ENCODE measurements at regions of chr1 and their contacts with region 1.

Region 1: DNA sequence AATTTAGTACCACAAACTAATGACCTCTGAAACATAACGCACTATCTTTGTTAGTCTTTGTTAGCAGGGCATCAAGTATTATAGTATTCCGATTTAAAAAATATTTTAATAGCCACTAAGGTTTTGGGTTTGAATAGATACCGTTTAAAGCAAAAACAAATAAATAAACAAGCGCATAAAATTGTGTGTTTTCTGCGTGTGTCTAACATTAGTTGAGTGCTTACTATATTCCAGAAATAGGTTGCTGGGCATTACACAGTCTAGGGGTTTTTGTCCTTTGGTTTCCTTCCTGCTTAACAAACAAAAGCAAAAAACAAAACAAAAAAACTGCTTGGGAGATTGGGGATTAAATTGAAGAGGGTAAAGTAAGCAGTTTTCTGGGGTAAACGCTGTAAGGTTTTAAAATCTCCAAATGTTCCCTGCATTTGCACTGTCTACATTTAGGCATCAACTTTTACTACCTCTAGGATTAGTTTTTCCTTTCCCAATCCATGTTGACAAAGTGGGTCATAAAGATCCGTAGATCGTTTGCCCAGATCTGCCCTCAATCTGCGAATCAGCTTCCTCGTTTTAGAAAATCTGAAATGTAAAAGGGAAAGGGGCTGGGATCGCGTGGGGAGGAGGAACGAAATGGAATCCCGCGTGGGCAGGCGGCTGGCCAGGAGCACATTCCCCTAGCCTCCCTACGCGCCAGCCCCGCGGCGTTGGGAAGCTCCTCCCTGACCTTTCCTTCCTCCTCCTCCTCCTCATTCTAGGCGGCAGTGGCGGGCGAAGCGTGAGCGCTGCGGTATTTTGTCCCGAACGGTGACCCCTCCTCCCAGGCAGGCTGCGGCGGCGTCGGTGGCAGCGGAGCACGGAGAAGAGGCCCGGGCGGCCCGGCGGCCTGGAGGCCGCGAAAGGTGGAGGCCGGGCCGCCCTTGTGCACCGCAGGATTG is at the start of gene KCTD3:
- DNase-seq: peak; percentile 87
- H3K4me3 Mint-ChIP-seq: peak within 1 kb of the TSS; percentile 95
- H3K27ac Mint-ChIP-seq: peak within 1 kb of the TSS; percentile 99
- H3K4me1 Mint-ChIP-seq: peaks cover 32% of the 10 kb centered on the region
- H3K27me3 Mint-ChIP-seq: no peaks in the 10 kb centered on the region
- CTCF ChIP-seq: no peak
- total RNA-seq, gene KCTD3: 48.8 and 50.2 TPM in 2 replicates

Region 2: DNA sequence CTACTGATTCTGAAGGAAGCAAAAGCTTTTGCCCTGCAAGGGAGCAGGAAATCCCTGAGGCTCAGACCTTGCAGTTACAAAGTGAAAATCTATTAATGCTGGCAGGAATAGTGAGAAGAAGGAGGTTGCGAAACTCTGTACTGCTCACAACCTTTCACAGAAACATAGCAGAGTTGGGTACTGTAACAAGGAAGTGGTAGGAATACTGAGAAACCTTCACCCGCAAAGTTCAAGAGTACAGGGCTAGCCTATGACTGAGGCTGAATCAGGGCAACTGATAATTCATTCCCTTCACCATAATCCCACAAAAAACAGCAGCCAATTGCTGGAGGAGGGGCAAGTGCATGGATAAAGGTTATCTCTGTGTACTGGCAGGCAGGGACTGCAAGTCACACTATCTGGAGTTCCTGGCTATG is 23.6 kb before region 1 on chr1:
- CTCF ChIA-PET with region 1: interaction called, 3 read pairs
- intact Hi-C with region 1: loop called (anchors 1 kb)
- DNase-seq: peak; percentile 71
- H3K4me3 Mint-ChIP-seq: peak overlapping the region; percentile 46
- H3K27ac Mint-ChIP-seq: peak overlapping the region; percentile 86
- H3K4me1 Mint-ChIP-seq: peaks cover 44% of the 10 kb centered on the region
- H3K27me3 Mint-ChIP-seq: no peaks in the 10 kb centered on the region
- CTCF ChIP-seq: no peak

Region 3: DNA sequence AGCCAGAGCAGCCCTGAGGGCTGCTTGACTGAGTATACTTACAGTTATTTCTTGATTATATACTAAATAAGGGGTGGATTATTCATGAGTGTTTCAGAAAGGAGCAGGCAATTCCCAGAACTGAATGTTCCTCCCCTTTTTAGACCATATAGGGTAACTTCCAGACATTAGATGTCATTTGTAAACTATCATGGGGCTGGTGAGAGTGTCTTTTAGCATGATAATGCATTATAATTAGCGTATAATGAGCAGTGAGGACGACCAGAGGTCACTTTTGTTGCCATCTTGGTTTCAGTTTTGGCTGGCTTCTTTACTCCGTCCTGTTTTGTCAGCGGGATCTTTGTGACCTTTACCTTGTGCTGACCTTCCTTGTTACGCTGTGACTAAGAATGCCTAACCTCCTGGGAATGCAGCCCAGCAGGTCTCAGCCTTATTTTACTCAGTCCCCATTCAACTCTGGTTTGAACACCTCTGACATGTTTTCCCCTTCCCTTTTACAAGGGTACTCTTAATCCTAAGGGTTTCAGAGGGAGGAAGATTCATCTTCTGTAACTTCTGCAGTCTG is 16.4 kb after region 1 on chr1:
- CTCF ChIA-PET with region 1: interaction called, 4 read pairs
- intact Hi-C with region 1: loop called (anchors 1 kb)
- DNase-seq: peak; percentile 70
- H3K4me3 Mint-ChIP-seq: peak overlapping the region; percentile 51
- H3K27ac Mint-ChIP-seq: peak overlapping the region; percentile 71
- H3K4me1 Mint-ChIP-seq: peaks cover 40% of the 10 kb centered on the region
- H3K27me3 Mint-ChIP-seq: no peaks in the 10 kb centered on the region
- CTCF ChIP-seq: no peak

Region 4: GRCh38 chr1:215606564-215607168 is 39.8 kb after region 1 on chr1:
- CTCF ChIA-PET with region 1: interaction called, 3 read pairs
- intact Hi-C with region 1: loop called (anchors 2 kb)
- DNase-seq: no peak
- H3K4me3 Mint-ChIP-seq: no peak overlapping the region
- H3K27ac Mint-ChIP-seq: peak overlapping the region; percentile 64
- H3K4me1 Mint-ChIP-seq: peaks cover 22% of the 10 kb centered on the region
- H3K27me3 Mint-ChIP-seq: no peaks in the 10 kb centered on the region
- CTCF ChIP-seq: peak; percentile 58